B cell (primary cell): ENCODE measurements at regions of chr10 and their contacts with region 1.

Region 1: DNA sequence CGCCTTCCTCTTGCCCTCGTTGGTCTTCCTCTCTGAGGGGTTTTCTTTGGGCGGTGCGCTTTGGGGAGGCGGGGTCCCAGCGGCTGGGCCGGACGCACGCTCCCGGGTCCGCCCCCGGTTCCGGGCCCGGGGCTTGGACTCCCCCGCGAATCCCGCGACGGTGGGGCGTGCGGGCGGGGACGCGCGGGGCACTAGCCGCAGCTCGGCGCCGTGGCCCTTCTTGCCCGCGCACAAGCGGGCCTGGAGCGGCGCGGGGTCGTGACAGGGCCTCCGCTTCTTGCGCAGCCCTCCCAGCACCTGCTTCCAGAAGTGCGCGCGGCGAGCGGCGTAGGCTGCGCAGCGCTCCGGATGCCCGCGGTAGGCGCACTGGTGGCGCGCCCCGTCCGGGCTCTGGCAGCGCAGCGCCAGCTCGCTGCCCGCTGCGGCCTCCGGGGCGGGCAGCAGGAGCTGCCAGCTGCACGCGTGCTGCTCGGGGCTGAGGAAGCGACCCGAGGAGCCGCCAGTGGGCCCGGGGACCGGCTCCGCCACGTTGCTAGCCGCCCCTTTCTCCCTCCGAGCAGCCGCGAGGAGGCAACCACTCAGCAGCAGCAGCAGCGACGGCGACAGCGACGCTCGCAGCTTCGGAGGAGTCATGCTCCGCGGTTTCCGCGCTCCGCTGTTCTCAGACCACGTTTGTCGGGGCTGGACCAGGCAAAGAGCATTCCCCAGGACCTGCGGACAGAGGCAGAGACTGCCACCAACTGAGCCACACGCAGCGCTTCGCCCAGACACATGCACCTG is 759 bp downstream of the FGFBP3 start:
- DNase-seq: peak; percentile 87
- ATAC-seq: peak; percentile 83
- H3K4me3 ChIP-seq: peak overlapping the region; percentile 61 to 75 (median 69)
- H3K4me3 Mint-ChIP-seq: peak overlapping the region; percentile 96
- H3K27ac ChIP-seq: peak overlapping the region; percentile 9 to 52
- H3K27ac Mint-ChIP-seq: peak overlapping the region; percentile 93
- H3K4me1 ChIP-seq: peaks cover 10 to 11% of the 10 kb centered on the region in 2 donors
- H3K4me1 Mint-ChIP-seq: peaks cover 18% of the 10 kb centered on the region
- H3K27me3 ChIP-seq: no peaks in the 10 kb centered on the region
- H3K27me3 Mint-ChIP-seq: peaks cover 7% of the 10 kb centered on the region
- CTCF ChIP-seq: peak; percentile 45

Region 2: DNA sequence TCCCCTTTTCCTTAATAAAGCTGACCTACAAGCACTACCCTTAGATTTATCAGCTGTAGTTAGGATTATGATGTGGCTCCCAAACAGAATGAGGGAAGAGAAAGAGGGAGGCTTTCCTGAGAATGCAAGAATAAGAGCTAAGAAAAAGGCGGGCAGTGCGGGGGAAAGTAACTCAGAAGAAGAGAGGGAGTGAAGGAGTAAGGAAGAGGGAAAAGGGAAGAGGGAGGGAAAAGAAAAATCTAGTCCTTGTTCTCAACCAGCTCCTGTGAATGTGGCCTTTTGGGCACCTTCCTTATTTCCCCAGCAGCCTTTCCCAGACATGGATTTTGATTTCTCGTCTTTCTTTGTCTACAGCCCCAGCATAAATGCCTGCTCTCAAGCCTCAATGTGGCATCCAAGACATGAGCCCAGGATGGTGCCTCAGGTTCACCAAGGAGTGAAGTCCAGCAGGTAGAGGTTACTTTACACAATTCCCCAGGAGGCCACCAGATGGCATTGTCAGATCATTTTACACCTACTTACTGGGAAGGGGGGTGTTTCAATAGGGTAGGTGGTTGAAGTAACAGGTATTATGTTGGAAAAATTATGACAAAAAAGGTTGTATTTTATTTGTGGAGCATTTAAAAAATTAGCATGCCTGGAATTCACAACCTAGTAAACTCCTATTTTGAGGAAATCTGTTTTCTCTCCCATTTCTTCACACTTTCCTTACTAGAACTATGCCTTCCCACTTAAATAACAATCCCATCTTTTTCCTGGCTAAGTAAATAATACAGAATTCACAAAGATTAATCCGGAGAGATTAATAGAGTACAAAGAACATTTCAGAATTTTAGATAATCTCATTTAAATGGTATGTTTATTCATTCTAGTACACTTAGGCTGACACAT is 1157.2 kb before region 1 on chr10:
- CTCF ChIA-PET with region 1: no interaction called
- POLR2A ChIA-PET with region 1: no interaction called
- intact Hi-C with region 1: loop called (anchors 5 kb)
- DNase-seq: peak; percentile 62
- ATAC-seq: no peak
- H3K4me3 ChIP-seq: no peak overlapping the region
- H3K4me3 Mint-ChIP-seq: no peak overlapping the region
- H3K27ac ChIP-seq: no peak overlapping the region
- H3K27ac Mint-ChIP-seq: no peak overlapping the region
- H3K4me1 ChIP-seq: peaks cover 0 to 6% of the 10 kb centered on the region in 2 donors
- H3K4me1 Mint-ChIP-seq: peaks cover 3% of the 10 kb centered on the region
- H3K27me3 ChIP-seq: peaks cover 0 to 4% (median 0%) of the 10 kb centered on the region in 4 experiments
- H3K27me3 Mint-ChIP-seq: peaks cover 44% of the 10 kb centered on the region
- CTCF ChIP-seq: peak; percentile 77

Region 3: DNA sequence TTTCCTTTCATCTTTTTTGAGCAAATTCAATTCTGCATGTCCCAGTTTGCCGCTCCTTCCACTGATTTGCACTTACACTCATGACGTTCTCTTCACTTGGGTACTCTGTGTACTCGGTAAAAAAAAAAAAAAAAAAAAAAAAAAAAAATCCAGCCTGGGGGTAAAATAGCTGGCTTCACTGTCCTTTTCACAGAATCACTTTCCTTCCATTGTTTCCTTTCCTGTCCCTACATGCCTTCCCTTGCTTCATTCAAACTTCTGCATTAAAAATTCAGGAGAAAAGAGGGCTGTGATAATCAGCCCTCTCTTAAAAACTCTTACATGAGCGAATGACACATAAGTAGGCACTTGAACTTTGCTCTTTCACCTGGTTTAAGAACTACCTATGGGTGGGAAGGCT is 996.4 kb before region 1 on chr10:
- CTCF ChIA-PET with region 1: interaction called, 4 read pairs
- POLR2A ChIA-PET with region 1: interaction called, 3 read pairs
- intact Hi-C with region 1: loop called (anchors 2 kb)
- DNase-seq: no peak
- ATAC-seq: no peak
- H3K4me3 ChIP-seq: no peak overlapping the region
- H3K4me3 Mint-ChIP-seq: no peak overlapping the region
- H3K27ac ChIP-seq: no peak overlapping the region
- H3K27ac Mint-ChIP-seq: no peak overlapping the region
- H3K4me1 ChIP-seq: no peaks in the 10 kb centered on the region
- H3K4me1 Mint-ChIP-seq: peaks cover 2% of the 10 kb centered on the region
- H3K27me3 ChIP-seq: no peaks in the 10 kb centered on the region
- H3K27me3 Mint-ChIP-seq: no peaks in the 10 kb centered on the region
- CTCF ChIP-seq: no peak

Region 4: GRCh38 chr10:91298224-91298871 is 610.2 kb before region 1 on chr10:
- CTCF ChIA-PET with region 1: interaction called, 12 read pairs
- POLR2A ChIA-PET with region 1: no interaction called
- intact Hi-C with region 1: no loop called
- DNase-seq: peak; percentile 85
- ATAC-seq: peak; percentile 94
- H3K4me3 ChIP-seq: peak overlapping the region in 4 of 5 experiments; percentile 14 to 54 (median 48)
- H3K4me3 Mint-ChIP-seq: peak overlapping the region; percentile 75
- H3K27ac ChIP-seq: no peak overlapping the region
- H3K27ac Mint-ChIP-seq: no peak overlapping the region
- H3K4me1 ChIP-seq: peaks cover 11% of the 10 kb centered on the region in 2 donors
- H3K4me1 Mint-ChIP-seq: peaks cover 9% of the 10 kb centered on the region
- H3K27me3 ChIP-seq: no peaks in the 10 kb centered on the region
- H3K27me3 Mint-ChIP-seq: peaks cover 21% of the 10 kb centered on the region
- CTCF ChIP-seq: peak; percentile 93

Region 5: DNA sequence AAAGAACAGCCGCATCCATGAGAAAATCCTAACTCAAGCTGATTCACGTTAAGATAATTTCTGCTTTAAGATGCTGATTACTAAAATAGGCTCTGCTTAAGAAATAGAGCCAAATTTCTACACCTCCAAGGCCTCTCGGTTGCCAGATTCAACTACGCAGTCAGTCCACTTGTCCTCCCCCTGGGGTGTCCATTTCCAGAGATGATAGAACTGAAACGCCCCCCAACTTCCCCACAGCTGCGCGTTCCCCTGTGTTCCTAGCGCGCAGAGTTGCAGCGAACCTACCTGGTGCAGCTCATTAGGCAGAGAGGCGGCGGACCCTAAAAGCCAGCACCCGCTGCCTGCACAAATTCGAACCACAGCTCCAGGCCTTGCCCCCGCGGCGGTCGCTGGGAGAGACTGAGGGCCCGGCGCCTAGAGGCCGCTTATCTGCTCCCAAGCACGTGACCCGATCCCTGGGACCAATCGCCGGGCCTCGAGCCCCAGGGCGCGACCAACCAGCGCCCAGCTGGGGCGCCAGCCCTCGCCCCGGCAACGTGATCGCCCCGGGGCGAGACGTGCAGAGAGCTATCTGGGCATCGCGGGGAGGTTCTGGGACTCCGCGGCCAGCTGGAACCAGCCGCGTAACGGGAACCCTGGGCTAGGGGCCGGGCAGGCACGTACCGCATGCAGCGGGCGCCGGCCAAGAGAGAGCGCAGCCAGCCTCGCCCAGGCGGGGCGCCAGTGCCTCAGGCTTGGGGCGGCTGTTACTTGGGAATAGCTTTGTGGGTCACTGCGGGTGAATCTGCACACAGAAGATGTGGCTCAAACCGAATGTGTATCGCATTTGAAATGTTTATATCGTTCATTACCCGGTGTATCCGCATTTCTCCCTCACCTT is 275.6 kb before region 1 on chr10 and contains the start of gene PPP1R3C:
- CTCF ChIA-PET with region 1: interaction called, 7 read pairs
- POLR2A ChIA-PET with region 1: no interaction called
- intact Hi-C with region 1: loop called (anchors 10 kb)
- DNase-seq: peak; percentile 44
- ATAC-seq: peak; percentile 73
- H3K4me3 ChIP-seq: peak within 1 kb of the TSS in 4 of 5 experiments; percentile 25 to 52 (median 36)
- H3K4me3 Mint-ChIP-seq: peak within 1 kb of the TSS; percentile 75
- H3K27ac ChIP-seq: no peak within 1 kb of the TSS
- H3K27ac Mint-ChIP-seq: no peak within 1 kb of the TSS
- H3K4me1 ChIP-seq: peaks cover 12 to 16% of the 10 kb centered on the region in 2 donors
- H3K4me1 Mint-ChIP-seq: peaks cover 17% of the 10 kb centered on the region
- H3K27me3 ChIP-seq: peaks cover 0 to 36% (median 16%) of the 10 kb centered on the region in 4 experiments
- H3K27me3 Mint-ChIP-seq: peaks cover 66% of the 10 kb centered on the region
- CTCF ChIP-seq: no peak
- total RNA-seq, gene PPP1R3C: not detected in 2 replicates

Region 6: GRCh38 chr10:91797874-91798648 is 110.5 kb before region 1 on chr10 and contains the start of gene TNKS2:
- CTCF ChIA-PET with region 1: interaction called, 34 read pairs
- POLR2A ChIA-PET with region 1: no interaction called
- intact Hi-C with region 1: loop called (anchors 1 kb)
- DNase-seq: peak; percentile 96
- ATAC-seq: peak; percentile 75
- H3K4me3 ChIP-seq: peak within 1 kb of the TSS; percentile 77 to 91 (median 83)
- H3K4me3 Mint-ChIP-seq: peak within 1 kb of the TSS; percentile 97
- H3K27ac ChIP-seq: peak within 1 kb of the TSS; percentile 91 to 97
- H3K27ac Mint-ChIP-seq: peak within 1 kb of the TSS; percentile 99
- H3K4me1 ChIP-seq: peaks cover 34 to 36% of the 10 kb centered on the region in 2 donors
- H3K4me1 Mint-ChIP-seq: peaks cover 62% of the 10 kb centered on the region
- H3K27me3 ChIP-seq: no peaks in the 10 kb centered on the region
- H3K27me3 Mint-ChIP-seq: no peaks in the 10 kb centered on the region
- CTCF ChIP-seq: no peak
- total RNA-seq, gene TNKS2: 45.8 and 48.1 TPM in 2 replicates

Region 7: GRCh38 chr10:91923371-91924211 is 15.1 kb after region 1 on chr10 and contains the start of gene BTAF1:
- CTCF ChIA-PET with region 1: interaction called, 54 read pairs
- POLR2A ChIA-PET with region 1: interaction called, 9 read pairs
- intact Hi-C with region 1: loop called (anchors 1 kb)
- DNase-seq: peak; percentile 96
- ATAC-seq: peak; percentile 93
- H3K4me3 ChIP-seq: peak within 1 kb of the TSS; percentile 88 to 98 (median 93)
- H3K4me3 Mint-ChIP-seq: peak within 1 kb of the TSS; percentile 86
- H3K27ac ChIP-seq: peak within 1 kb of the TSS; percentile 93 to 99
- H3K27ac Mint-ChIP-seq: peak within 1 kb of the TSS; percentile 100
- H3K4me1 ChIP-seq: peaks cover 18 to 20% of the 10 kb centered on the region in 2 donors
- H3K4me1 Mint-ChIP-seq: peaks cover 39% of the 10 kb centered on the region
- H3K27me3 ChIP-seq: peaks cover 0 to 4% (median 2%) of the 10 kb centered on the region in 4 experiments
- H3K27me3 Mint-ChIP-seq: peaks cover 3% of the 10 kb centered on the region
- CTCF ChIP-seq: no peak
- total RNA-seq, gene BTAF1: 78.1 and 81.7 TPM in 2 replicates